Activated CD4-positive, alpha-beta memory T cell treated with anti-CD3 and anti-CD28 coated beads, Interleukin-2, amount 10 ng/mL, durations not matched to agents 7 days and 5 days (primary cell): ENCODE measurements at regions of chr10 and their contacts with region 1.

Region 1: GRCh38 chr10:119103903-119104652 is at the start of gene DENND10:
- DNase-seq: peak; percentile 81
- H3K4me3 Mint-ChIP-seq: peak within 1 kb of the TSS; percentile 76
- H3K27ac Mint-ChIP-seq: peak within 1 kb of the TSS; percentile 21
- H3K4me1 Mint-ChIP-seq: peaks cover 43% of the 10 kb centered on the region
- H3K27me3 Mint-ChIP-seq: no peaks in the 10 kb centered on the region
- total RNA-seq, gene DENND10: 52.4 to 57.1 TPM

Region 2: DNA sequence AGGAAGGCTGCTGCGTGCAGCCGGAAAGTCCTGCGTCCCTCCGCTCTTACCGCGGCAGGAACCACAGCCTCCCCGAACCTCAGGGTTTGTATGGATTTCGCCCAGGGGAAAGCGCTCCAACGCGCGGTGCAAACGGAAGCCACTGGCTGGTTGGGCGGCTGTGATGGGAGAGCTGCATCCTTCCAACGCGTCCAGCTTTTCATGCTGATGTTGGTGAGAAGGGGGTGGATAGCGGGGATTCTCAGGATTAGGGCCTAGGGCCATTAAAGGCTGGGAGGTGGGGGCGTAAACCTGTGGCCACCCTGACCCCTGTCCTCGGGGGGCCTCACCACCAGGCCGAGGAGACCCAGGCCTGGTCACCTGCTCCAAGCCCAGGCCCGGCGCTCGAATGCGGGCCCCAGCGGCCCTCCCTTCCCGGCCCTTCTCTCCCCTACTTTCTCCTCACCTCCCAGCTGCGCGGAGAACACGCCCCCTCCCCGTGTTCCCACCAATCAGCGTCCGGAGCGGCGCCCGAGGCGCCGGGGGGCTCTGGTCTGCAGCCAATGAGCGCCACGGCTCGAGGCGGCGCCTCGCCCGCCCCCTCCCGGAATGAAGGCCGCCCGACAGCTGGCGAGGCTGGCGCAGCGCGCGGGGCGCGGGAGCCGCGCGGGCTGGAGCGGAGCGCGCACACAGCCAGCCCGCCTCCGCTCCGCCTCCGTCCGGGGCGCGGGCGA is 75.0 kb before region 1 on chr10:
- CTCF ChIA-PET with region 1: no interaction called
- POLR2A ChIA-PET with region 1: interaction called, 10 read pairs
- DNase-seq: peak; percentile 83
- H3K4me3 Mint-ChIP-seq: peak overlapping the region; percentile 61
- H3K27ac Mint-ChIP-seq: no peak overlapping the region
- H3K4me1 Mint-ChIP-seq: peaks cover 20% of the 10 kb centered on the region
- H3K27me3 Mint-ChIP-seq: peaks cover 7% of the 10 kb centered on the region

Region 3: GRCh38 chr10:119080521-119081260 is 23.4 kb before region 1 on chr10 and contains the start of gene EIF3A:
- CTCF ChIA-PET with region 1: interaction called, 5 read pairs
- POLR2A ChIA-PET with region 1: interaction called, 60 read pairs
- DNase-seq: peak; percentile 94
- H3K4me3 Mint-ChIP-seq: peak within 1 kb of the TSS; percentile 95
- H3K27ac Mint-ChIP-seq: peak within 1 kb of the TSS; percentile 93
- H3K4me1 Mint-ChIP-seq: peaks cover 50% of the 10 kb centered on the region
- H3K27me3 Mint-ChIP-seq: no peaks in the 10 kb centered on the region
- total RNA-seq, gene EIF3A: 129 to 130 TPM

Region 4: DNA sequence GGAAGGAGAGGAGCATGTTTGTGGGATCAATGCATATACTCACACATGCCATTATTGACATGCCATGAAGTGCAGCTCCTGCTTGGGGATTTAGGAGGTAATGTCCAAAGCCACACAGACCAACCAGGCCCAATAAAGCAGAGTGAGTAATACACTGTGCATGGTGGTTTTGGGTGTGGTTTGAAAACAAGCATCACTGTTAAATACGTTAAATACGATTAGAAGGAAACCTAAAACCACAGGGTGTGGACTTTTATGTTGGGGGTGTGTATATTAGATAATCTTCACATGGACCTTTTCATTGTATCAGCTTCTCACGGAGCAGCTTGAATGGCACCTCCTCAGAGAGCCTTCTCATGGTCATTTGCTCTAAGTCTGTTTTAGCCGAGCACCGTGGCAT is 13.1 kb before region 1 on chr10:
- CTCF ChIA-PET with region 1: interaction called, 9 read pairs
- POLR2A ChIA-PET with region 1: interaction called, 111 read pairs
- DNase-seq: peak; percentile 73
- H3K4me3 Mint-ChIP-seq: peak overlapping the region; percentile 54
- H3K27ac Mint-ChIP-seq: peak overlapping the region; percentile 100
- H3K4me1 Mint-ChIP-seq: peaks cover 71% of the 10 kb centered on the region
- H3K27me3 Mint-ChIP-seq: no peaks in the 10 kb centered on the region

Region 5: GRCh38 chr10:119120413-119120867 is 16.4 kb after region 1 on chr10:
- CTCF ChIA-PET with region 1: interaction called, 3 read pairs
- POLR2A ChIA-PET with region 1: interaction called, 16 read pairs
- DNase-seq: no peak
- H3K4me3 Mint-ChIP-seq: no peak overlapping the region
- H3K27ac Mint-ChIP-seq: peak overlapping the region; percentile 26
- H3K4me1 Mint-ChIP-seq: peaks cover 22% of the 10 kb centered on the region
- H3K27me3 Mint-ChIP-seq: no peaks in the 10 kb centered on the region

Region 6: DNA sequence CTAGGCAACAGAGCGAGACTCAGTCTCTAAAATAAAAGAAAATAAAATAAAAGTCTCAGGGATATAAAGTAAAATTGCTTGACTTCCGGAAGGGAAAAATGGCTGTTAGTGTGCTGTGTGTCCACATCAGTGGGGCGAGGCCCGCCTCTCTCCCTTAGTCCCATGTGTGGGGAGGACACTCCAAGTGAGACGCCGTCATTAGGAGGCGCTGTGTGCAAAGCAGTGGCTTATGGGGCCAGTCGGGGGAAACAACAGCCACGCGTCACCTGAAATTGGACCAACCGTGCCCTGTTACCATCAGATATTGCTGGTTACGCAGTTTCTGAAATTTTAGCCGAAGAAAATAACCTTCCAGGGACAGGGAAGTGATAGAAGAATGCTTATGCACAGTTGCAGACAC is 45.6 kb after region 1 on chr10:
- CTCF ChIA-PET with region 1: no interaction called
- POLR2A ChIA-PET with region 1: no interaction called
- DNase-seq: no peak
- H3K4me3 Mint-ChIP-seq: no peak overlapping the region
- H3K27ac Mint-ChIP-seq: no peak overlapping the region
- H3K4me1 Mint-ChIP-seq: no peaks in the 10 kb centered on the region
- H3K27me3 Mint-ChIP-seq: no peaks in the 10 kb centered on the region

Region 7: DNA sequence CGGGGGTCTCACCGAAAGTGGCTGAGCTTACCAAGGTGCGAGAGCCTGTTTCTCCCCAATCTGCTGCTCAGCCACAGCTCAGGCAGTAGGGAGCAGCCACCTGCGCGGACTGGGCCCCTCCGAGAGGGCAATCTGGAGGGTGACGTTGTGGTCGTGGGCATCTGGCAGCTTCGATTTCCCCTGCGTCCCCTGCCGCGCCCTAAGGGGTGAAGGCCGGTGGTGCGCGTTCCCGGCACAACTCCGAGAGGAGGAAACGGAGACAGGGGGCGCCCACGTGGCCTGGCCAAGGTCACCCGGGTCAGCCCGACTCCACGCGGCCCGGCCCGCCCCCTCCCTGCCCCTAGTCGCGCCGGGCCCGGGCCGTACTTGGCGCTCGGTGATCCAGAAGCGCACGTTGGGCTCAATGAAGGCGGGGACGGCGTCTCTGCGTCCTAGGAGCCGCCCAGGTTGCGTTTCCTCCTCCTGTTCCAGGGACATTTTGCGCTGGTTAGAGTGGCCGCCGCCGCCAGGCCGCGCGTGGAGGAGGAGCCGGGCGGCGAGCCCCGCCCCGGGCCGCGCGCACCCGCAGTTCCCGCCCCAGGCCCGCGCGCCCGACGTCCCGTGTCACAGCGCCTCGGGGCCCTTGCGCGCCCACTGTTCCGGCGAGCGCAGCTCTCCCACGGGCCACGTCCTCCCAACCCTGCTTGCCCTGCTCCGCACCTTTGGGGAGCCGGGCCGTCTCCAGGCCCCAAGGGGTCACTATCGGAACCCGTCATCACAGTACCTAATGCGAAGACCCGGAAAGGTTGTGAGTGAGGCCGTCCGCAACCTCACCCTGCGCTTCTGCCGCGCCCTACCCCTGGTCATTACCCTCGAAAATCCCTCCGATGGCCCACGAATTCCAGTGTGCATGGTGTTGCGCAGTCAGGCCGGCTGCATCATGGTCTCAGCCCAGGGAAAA is 61.4 kb after region 1 on chr10 and contains the start of gene SFXN4:
- CTCF ChIA-PET with region 1: no interaction called
- POLR2A ChIA-PET with region 1: interaction called, 17 read pairs
- DNase-seq: peak; percentile 85
- H3K4me3 Mint-ChIP-seq: peak within 1 kb of the TSS; percentile 88
- H3K27ac Mint-ChIP-seq: peak within 1 kb of the TSS; percentile 90
- H3K4me1 Mint-ChIP-seq: peaks cover 44% of the 10 kb centered on the region
- H3K27me3 Mint-ChIP-seq: no peaks in the 10 kb centered on the region
- total RNA-seq, gene SFXN4: 19.6 to 22.6 TPM